Thyroid gland (tissue), 4 donors: ENCODE measurements at regions of chr3 and their contacts with region 1.

Region 1: DNA sequence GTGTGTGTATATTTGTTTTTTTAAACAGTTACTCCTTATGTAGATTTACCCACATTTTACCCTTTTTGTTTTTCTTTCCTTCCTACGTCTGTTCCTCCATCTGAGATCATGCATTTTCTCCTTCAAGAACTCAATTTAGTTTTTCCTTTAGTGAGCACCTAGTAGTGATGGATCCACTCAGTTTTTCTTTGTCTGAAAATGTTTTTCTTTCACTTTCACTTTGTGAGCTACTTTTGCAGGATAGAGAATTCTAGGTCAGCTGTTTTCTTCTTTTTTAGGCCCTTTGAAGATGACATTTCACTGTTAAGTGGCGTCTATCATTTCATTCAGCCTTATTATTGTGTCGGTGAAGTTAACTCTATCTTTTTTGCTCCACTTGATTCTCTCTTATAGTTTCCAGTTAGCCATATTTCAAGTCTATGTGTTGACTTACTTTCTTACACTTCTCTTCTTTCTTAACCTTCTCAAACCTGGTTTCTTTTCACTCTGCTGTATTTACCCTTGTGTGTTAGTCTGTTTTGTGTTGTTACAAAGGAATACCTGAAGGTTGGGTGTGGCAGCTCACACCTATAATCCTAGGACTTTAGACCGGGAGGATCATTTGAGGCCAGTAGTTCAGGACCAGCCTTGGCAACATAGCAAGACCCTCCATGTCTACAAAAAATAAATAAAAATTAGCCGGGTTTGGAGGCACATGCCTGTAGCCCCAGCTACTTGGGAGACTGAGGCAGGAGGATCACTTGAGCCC is 55.8 kb downstream of the PRKCI start:
- DNase-seq: no peak
- H3K4me3 ChIP-seq: no peak overlapping the region
- H3K27ac ChIP-seq: no peak overlapping the region
- H3K4me1 ChIP-seq: no peaks in the 10 kb centered on the region
- H3K27me3 ChIP-seq: no peaks in the 10 kb centered on the region
- CTCF ChIP-seq: no peak
- POLR2A ChIP-seq: no peak

Region 2: DNA sequence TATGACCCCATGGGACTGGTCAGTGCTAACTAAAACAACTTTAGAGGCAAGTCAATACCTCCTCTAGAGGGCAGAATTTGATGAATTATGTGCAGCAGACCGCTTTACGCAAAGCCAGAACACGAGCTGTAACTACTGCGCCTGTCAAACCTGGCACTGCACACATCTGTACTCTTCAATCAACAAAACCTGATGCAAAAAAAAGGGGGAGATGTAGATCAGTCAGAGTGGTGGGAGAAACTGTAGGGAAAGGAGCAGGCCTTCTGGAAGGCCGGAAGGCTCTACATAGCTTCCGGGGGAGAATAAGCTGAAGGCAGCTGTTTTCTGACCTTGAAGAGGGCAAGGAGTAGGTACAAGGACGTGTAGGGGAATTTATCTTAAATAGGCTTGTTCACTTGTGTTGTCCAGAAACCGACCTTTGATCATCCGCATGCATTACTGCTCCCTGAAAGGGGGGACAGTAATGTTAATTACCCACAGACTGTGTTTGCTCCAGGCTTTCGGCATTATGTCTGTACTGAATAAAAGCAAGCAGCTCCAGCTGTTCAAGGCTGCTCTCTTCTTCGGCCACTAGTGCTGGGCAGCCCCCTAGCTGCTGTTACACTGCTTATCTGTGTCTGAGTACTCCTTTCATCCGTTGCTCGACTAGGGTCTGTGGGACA is 199.3 kb before region 1 on chr3:
- intact Hi-C with region 1: no loop called
- DNase-seq: no peak
- H3K4me3 ChIP-seq: no peak overlapping the region
- H3K27ac ChIP-seq: no peak overlapping the region
- H3K4me1 ChIP-seq: peaks cover 8 to 10% of the 10 kb centered on the region in 2 donors
- H3K27me3 ChIP-seq: no peaks in the 10 kb centered on the region
- CTCF ChIP-seq: no peak
- POLR2A ChIP-seq: no peak

Region 3: DNA sequence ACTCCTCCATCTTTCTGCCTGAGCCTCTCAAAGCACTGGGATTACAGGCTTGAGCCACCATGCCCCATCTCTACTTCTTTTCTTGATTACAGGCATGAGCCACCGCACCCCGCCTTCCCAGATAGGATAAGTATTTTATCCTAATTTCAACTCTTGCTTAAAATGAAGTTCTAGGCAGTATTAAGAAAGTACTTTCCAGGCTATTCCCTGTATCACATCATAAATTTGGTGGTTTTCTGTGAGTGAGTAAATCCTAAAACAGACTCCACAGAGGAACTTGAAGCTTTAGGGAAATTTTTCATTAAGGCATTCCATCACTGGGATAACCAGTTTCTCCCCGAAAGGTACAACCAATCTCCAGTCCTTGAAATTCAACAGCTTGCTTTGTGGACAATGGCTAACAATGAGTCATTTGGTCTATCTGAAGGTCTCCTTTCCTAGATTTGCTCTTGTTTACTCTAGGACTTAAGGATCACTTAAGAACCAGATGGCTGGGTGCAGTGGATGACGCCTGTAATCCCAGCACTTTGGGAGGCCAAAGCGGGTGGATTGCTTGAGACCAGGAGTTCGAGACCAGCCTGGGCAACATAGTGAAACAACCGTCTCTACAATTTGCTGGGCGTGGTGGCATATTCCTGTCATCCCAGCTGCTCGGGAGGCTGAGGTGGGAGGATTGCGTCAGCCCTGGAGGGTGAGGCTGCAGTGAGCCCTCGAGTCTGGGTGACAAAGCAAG is 29.8 kb after region 1 on chr3:
- intact Hi-C with region 1: loop called (anchors 2 kb)
- DNase-seq: peak in 1 of 2 donors; percentile 20
- H3K4me3 ChIP-seq: no peak overlapping the region
- H3K27ac ChIP-seq: no peak overlapping the region
- H3K4me1 ChIP-seq: no peaks in the 10 kb centered on the region
- H3K27me3 ChIP-seq: no peaks in the 10 kb centered on the region
- CTCF ChIP-seq: no peak
- POLR2A ChIP-seq: no peak

Region 4: GRCh38 chr3:170372190-170372879 is 94.3 kb after region 1 on chr3:
- intact Hi-C with region 1: no loop called
- DNase-seq: no peak
- H3K4me3 ChIP-seq: no peak overlapping the region
- H3K27ac ChIP-seq: no peak overlapping the region
- H3K4me1 ChIP-seq: peaks cover 0 to 29% of the 10 kb centered on the region in 2 donors
- H3K27me3 ChIP-seq: no peaks in the 10 kb centered on the region
- CTCF ChIP-seq: no peak
- POLR2A ChIP-seq: no peak

Region 5: GRCh38 chr3:170418422-170419398 is 140.7 kb after region 1 on chr3 and contains the start of gene CLDN11:
- intact Hi-C with region 1: no loop called
- DNase-seq: peak; percentile 41 to 43
- H3K4me3 ChIP-seq: peak within 1 kb of the TSS in 2 of 3 donors; percentile 31 to 48
- H3K27ac ChIP-seq: no peak within 1 kb of the TSS
- H3K4me1 ChIP-seq: peaks cover 11 to 13% of the 10 kb centered on the region in 2 donors
- H3K27me3 ChIP-seq: no peaks in the 10 kb centered on the region
- CTCF ChIP-seq: peak in 1 of 6 experiments; percentile 5
- POLR2A ChIP-seq: no peak
- total RNA-seq, gene CLDN11: 3.2 to 6.6 (median 4.6) TPM